ENCODE measurements at regions of chr22 and their contacts with region 1.

Region 1: GRCh38 chr22:26461188-26461810 is 22.3 kb downstream of the HPS4 start:
- DNase-seq: peak; percentile 57
- H3K4me3 Mint-ChIP-seq: no peak overlapping the region
- H3K27ac Mint-ChIP-seq: no peak overlapping the region
- H3K4me1 Mint-ChIP-seq: no peaks in the 10 kb centered on the region
- H3K27me3 Mint-ChIP-seq: no peaks in the 10 kb centered on the region

Region 2: GRCh38 chr22:26172389-26172990 is 288.8 kb before region 1 on chr22:
- CTCF ChIA-PET with region 1: no interaction called
- intact Hi-C with region 1: no loop called
- DNase-seq: peak; percentile 56
- H3K4me3 Mint-ChIP-seq: no peak overlapping the region
- H3K27ac Mint-ChIP-seq: no peak overlapping the region
- H3K4me1 Mint-ChIP-seq: peaks cover 8% of the 10 kb centered on the region
- H3K27me3 Mint-ChIP-seq: peaks cover 37% of the 10 kb centered on the region

Region 3: GRCh38 chr22:26364066-26365015 is 97.0 kb before region 1 on chr22:
- CTCF ChIA-PET with region 1: interaction called, 22 read pairs
- intact Hi-C with region 1: loop called (anchors 1 kb)
- DNase-seq: peak; percentile 64
- H3K4me3 Mint-ChIP-seq: no peak overlapping the region
- H3K27ac Mint-ChIP-seq: no peak overlapping the region
- H3K4me1 Mint-ChIP-seq: peaks cover 7% of the 10 kb centered on the region
- H3K27me3 Mint-ChIP-seq: peaks cover 12% of the 10 kb centered on the region

Region 4: DNA sequence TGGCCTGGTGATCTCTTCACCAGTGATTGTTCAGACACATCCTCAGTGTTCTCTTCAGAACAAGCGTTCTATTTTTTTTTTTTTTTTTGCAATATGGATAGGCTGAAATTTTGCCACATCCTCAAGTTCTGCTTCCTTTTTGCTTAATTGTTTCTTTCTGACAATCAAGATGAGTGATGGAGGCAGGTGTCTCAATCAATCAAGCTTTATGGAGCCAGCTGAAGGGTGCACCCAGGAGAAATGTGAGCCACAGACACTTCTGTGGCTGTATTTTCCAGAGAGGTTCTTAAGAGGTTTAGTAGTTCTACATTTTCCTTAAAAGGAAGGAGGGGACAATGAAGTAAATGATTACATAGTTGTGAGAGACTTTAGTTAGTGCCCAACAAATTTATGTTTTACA is 76.1 kb before region 1 on chr22:
- CTCF ChIA-PET with region 1: interaction called, 13 read pairs
- intact Hi-C with region 1: no loop called
- DNase-seq: no peak
- H3K4me3 Mint-ChIP-seq: no peak overlapping the region
- H3K27ac Mint-ChIP-seq: no peak overlapping the region
- H3K4me1 Mint-ChIP-seq: no peaks in the 10 kb centered on the region
- H3K27me3 Mint-ChIP-seq: peaks cover 26% of the 10 kb centered on the region

Region 5: DNA sequence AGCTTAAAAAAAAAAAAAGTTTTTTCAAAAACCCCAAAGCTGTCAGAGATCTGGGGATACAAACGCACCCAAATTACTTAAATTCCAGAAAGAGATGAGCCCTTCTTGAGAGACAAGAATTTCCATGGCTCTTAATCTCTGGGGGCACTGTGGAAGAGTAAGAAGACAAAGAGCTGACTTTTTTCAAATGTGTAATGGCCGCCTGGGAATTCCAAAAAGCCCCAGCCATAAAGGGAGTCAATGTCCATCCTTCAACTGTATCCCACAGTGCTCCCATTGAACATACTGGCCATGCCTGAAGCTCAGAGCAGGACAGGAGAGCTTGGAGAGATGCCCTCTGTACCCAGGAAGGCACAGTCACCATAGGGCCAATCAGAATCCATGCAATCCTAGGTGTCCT is 69.7 kb before region 1 on chr22:
- CTCF ChIA-PET with region 1: interaction called, 44 read pairs
- intact Hi-C with region 1: no loop called
- DNase-seq: no peak
- H3K4me3 Mint-ChIP-seq: no peak overlapping the region
- H3K27ac Mint-ChIP-seq: no peak overlapping the region
- H3K4me1 Mint-ChIP-seq: no peaks in the 10 kb centered on the region
- H3K27me3 Mint-ChIP-seq: peaks cover 9% of the 10 kb centered on the region

Region 6: GRCh38 chr22:26398741-26399153 is 62.6 kb before region 1 on chr22:
- CTCF ChIA-PET with region 1: interaction called, 44 read pairs
- intact Hi-C with region 1: loop called (anchors 1 kb)
- DNase-seq: peak; percentile 84
- H3K4me3 Mint-ChIP-seq: no peak overlapping the region
- H3K27ac Mint-ChIP-seq: no peak overlapping the region
- H3K4me1 Mint-ChIP-seq: peaks cover 2% of the 10 kb centered on the region
- H3K27me3 Mint-ChIP-seq: no peaks in the 10 kb centered on the region

Region 7: DNA sequence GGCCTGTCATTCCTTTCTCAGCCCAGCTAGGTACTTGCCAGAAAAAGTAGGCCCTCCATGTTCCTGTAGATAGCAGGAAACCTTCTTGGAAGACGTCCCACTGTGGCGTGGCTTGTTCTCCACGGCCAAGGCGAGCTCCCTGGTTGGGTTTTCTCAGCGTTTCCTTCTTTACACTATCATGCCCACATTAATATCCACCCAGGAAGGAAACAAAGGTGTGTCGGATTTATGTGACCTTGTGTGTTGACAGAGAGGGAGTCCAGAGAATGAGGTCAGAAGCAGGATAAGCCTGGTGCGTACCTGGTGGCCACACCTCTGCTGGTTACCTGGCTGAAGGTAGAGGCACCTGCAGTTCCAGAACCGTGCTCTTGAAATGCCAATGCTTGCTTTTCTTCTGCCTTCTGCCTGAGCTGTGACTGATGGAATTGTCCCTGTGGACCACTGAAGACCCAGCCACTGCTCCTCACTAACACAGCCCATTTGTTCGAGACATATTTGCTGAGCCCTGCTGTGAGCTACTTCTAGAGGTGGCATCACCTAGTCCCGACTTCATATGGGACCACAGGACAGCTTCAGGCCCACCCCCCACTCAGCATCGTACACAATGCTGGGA is 24.3 kb before region 1 on chr22:
- CTCF ChIA-PET with region 1: interaction called, 11 read pairs
- intact Hi-C with region 1: no loop called
- DNase-seq: no peak
- H3K4me3 Mint-ChIP-seq: no peak overlapping the region
- H3K27ac Mint-ChIP-seq: no peak overlapping the region
- H3K4me1 Mint-ChIP-seq: peaks cover 34% of the 10 kb centered on the region
- H3K27me3 Mint-ChIP-seq: no peaks in the 10 kb centered on the region

Region 8: DNA sequence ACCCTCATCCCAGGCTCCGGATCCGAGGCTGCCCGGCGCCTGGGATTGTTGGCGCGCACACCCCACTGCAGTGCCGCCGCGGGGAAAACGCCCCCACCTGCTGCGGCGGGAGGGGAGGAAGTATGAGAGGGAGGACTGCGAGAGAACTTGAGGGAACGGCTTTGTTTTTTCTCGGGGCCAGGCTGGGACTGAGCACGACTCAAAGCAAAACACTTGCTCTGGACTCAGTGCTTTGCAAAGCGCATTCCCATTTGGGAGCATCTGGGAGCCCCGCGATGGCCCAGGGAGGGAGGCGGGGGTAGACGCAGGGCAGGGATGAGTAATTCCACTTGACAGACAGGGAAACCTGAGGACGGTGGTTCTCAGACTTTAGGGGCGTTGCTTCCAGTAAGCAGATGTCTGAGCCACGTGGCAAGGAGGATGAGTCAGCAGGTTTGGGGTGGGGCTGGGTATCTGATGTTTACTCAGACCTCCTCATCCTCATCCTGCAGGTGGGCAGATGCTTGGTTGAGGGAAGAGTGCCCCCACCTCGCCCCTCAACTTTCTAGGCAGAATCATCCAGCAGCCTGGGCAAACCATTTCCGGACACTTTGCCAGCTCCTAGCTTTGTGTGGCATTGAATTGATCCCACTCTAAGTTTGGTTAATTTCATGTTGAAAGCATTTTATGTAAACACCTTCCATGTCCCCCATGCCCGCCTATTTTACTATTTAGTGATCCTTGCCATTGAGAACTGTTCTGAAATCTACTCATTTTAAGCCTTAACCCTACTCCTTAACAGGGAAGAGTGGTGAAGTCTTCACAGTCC is 197.6 kb after region 1 on chr22:
- CTCF ChIA-PET with region 1: no interaction called
- intact Hi-C with region 1: no loop called
- DNase-seq: peak; percentile 95
- H3K4me3 Mint-ChIP-seq: peak overlapping the region; percentile 90
- H3K27ac Mint-ChIP-seq: peak overlapping the region; percentile 80
- H3K4me1 Mint-ChIP-seq: peaks cover 26% of the 10 kb centered on the region
- H3K27me3 Mint-ChIP-seq: peaks cover 2% of the 10 kb centered on the region

Measured in activated naive CD4-positive, alpha-beta T cell treated with anti-CD3 and anti-CD28 coated beads for 36 hours (primary cell).